ENCODE measurements at regions of chr16 and their contacts with region 1.

Region 1: GRCh38 chr16:28924732-28925385 is at the start of gene RABEP2:
- DNase-seq: peak; percentile 89 to 100 (median 96)
- ATAC-seq: peak; percentile 89
- H3K4me3 ChIP-seq: peak within 1 kb of the TSS; percentile 74
- H3K4me3 Mint-ChIP-seq: peak within 1 kb of the TSS; percentile 89 to 97 (median 94)
- H3K27ac ChIP-seq: peak within 1 kb of the TSS; percentile 99
- H3K27ac Mint-ChIP-seq: peak within 1 kb of the TSS; percentile 97 to 99 (median 99)
- H3K4me1 ChIP-seq: peaks cover 7 to 8% of the 10 kb centered on the region in 2 donors
- H3K4me1 Mint-ChIP-seq: peaks cover 15 to 24% (median 19%) of the 10 kb centered on the region in 7 donors
- H3K27me3 ChIP-seq: no peaks in the 10 kb centered on the region
- H3K27me3 Mint-ChIP-seq: no peaks in the 10 kb centered on the region
- total RNA-seq, gene RABEP2: 19.9 to 30.3 (median 27.3) TPM

Region 2: DNA sequence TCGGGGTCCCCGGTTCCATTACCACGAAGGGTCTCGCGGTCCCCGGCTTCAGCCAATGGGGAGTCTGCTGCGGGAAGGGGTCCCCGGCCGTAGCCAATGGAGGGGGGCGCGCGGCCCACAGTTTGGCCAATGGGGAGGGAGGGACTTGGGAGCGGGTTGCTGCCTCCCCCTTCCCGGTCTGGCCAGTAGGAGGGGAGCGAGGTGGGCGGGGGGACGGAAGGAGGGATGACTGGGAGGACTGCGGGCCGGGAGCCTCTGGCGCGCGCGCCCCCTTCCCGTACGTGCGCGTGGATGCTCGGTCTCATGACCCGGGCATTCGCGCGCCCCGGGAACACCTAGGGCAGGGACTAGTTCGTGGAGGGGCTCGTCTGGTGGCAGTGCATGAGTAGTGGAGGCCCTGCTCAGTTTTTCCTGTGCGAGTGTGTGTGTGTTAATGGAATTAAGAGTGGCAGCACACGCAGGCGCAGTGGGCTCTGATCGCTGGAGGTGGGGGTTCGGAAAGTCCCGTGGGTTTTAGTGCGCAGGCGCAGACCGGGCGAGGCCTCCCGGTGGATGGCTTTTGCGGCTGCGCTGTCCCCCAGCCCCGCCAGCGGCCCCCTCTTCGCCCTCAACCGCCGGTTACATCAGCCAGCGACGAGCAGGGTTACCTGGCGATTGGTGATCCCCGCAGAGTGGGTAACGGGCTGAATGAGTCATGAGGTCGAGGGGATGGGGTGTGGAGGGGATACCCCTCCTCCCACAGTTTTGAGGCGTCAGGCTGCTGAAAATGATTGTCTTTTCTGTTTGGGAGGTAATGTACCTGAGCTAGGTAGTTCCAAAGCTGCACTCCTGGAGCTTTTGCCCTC is 100.8 kb before region 1 on chr16:
- CTCF ChIA-PET with region 1: interaction called, 3 read pairs
- POLR2A ChIA-PET with region 1: interaction called, 12 read pairs
- intact Hi-C with region 1: loop called (anchors 1 kb)
- DNase-seq: peak; percentile 92 to 97 (median 94)
- ATAC-seq: peak; percentile 82
- H3K4me3 ChIP-seq: peak overlapping the region; percentile 79
- H3K4me3 Mint-ChIP-seq: peak overlapping the region; percentile 92 to 99 (median 97)
- H3K27ac ChIP-seq: peak overlapping the region; percentile 94
- H3K27ac Mint-ChIP-seq: peak overlapping the region; percentile 96 to 100 (median 99)
- H3K4me1 ChIP-seq: peaks cover 19 to 20% of the 10 kb centered on the region in 2 donors
- H3K4me1 Mint-ChIP-seq: peaks cover 14 to 55% (median 52%) of the 10 kb centered on the region in 7 donors
- H3K27me3 ChIP-seq: no peaks in the 10 kb centered on the region
- H3K27me3 Mint-ChIP-seq: peaks cover 0 to 4% (median 0%) of the 10 kb centered on the region in 5 donors

Region 3: DNA sequence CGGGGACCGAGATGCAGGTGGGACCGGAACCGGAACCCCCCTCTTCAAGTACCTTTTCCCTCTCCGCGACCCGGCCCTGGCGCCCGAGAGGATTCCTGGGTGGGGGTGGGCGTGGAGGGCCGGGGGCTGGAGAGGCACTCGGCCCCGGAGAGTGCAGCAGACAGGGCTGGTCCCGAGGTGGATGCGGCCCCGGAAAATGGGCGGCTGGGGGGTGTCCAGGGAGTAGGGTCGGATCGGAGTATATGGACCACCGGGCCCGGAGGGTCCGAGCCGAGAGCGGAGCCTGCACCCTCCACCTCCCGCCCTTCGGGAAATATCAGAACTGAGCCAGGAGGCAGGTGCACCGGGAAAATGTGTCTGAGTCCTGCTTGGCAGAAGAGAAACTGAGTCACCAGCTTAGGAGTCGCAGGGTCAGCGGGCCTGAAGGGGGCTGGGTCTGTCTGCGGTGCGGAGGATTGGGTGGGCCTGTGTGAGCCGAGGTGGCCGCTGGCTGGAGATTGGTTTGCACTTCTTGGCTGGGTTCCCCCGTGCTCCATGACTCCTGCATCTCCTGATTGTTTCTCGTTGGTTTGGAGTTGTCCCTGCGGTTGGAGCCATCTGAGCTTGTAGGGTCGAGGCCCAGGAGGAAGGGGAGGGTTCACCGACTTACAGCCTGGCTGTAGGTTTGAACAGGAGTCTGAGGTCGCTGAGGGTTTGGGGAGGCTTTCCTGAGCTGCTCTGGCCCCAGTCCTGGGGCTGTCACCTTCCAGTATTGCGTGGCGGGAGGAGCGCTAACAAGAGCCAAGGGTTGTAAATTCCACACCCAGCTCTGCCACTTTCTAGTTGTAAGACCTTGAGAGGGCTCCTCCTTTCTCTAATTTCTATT is 60.7 kb before region 1 on chr16:
- CTCF ChIA-PET with region 1: no interaction called
- POLR2A ChIA-PET with region 1: interaction called, 3 read pairs
- intact Hi-C with region 1: loop called (anchors 1 kb)
- DNase-seq: peak in 4 of 9 donors; percentile 24 to 43 (median 30)
- ATAC-seq: no peak
- H3K4me3 ChIP-seq: peak overlapping the region; percentile 96
- H3K4me3 Mint-ChIP-seq: peak overlapping the region; percentile 97 to 100 (median 99)
- H3K27ac ChIP-seq: peak overlapping the region; percentile 85
- H3K27ac Mint-ChIP-seq: peak overlapping the region; percentile 95 to 99 (median 97)
- H3K4me1 ChIP-seq: peaks cover 7 to 11% of the 10 kb centered on the region in 2 donors
- H3K4me1 Mint-ChIP-seq: peaks cover 15 to 42% (median 29%) of the 10 kb centered on the region in 7 donors
- H3K27me3 ChIP-seq: no peaks in the 10 kb centered on the region
- H3K27me3 Mint-ChIP-seq: no peaks in the 10 kb centered on the region

Region 4: DNA sequence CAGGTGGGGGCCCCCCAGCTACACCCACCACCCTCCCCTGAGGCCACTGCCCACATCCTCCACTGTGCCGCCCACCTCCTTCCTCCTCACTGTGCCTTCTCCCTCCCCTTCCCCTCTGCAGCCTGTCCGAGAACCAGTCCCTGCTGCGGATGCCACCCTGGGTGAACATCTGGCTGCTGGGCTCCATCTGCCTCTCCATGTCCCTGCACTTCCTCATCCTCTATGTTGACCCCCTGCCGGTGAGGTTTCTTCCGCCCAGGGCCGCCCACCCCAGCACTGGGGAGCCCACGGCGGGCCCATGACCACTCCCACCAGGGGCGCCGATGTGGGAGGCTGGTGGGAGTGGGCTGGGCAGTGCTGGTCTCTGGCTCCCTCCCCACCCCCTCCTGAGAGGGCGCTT is 21.9 kb before region 1 on chr16:
- CTCF ChIA-PET with region 1: no interaction called
- POLR2A ChIA-PET with region 1: no interaction called
- intact Hi-C with region 1: no loop called
- DNase-seq: no peak
- ATAC-seq: peak; percentile 40
- H3K4me3 ChIP-seq: no peak overlapping the region
- H3K4me3 Mint-ChIP-seq: no peak overlapping the region
- H3K27ac ChIP-seq: no peak overlapping the region
- H3K27ac Mint-ChIP-seq: peak overlapping the region in 1 of 9 donors; percentile 80
- H3K4me1 ChIP-seq: no peaks in the 10 kb centered on the region
- H3K4me1 Mint-ChIP-seq: peaks cover 0 to 3% (median 0%) of the 10 kb centered on the region in 7 donors
- H3K27me3 ChIP-seq: no peaks in the 10 kb centered on the region
- H3K27me3 Mint-ChIP-seq: no peaks in the 10 kb centered on the region

Region 5: GRCh38 chr16:28935924-28936783 is 11.3 kb after region 1 on chr16:
- CTCF ChIA-PET with region 1: no interaction called
- POLR2A ChIA-PET with region 1: interaction called, 14 read pairs
- intact Hi-C with region 1: loop called (anchors 1 kb)
- DNase-seq: peak; percentile 75 to 92 (median 86)
- ATAC-seq: peak; percentile 100
- H3K4me3 ChIP-seq: peak overlapping the region; percentile 14
- H3K4me3 Mint-ChIP-seq: peak overlapping the region; percentile 54 to 82 (median 78)
- H3K27ac ChIP-seq: peak overlapping the region; percentile 51
- H3K27ac Mint-ChIP-seq: peak overlapping the region; percentile 17 to 87 (median 74)
- H3K4me1 ChIP-seq: peaks cover 0 to 9% of the 10 kb centered on the region in 2 donors
- H3K4me1 Mint-ChIP-seq: peaks cover 13 to 23% (median 19%) of the 10 kb centered on the region in 7 donors
- H3K27me3 ChIP-seq: no peaks in the 10 kb centered on the region
- H3K27me3 Mint-ChIP-seq: peaks cover 0 to 4% (median 0%) of the 10 kb centered on the region in 5 donors

Region 6: GRCh38 chr16:28950648-28951409 is 26.0 kb after region 1 on chr16 and contains the start of gene NFATC2IP:
- CTCF ChIA-PET with region 1: interaction called, 11 read pairs
- POLR2A ChIA-PET with region 1: interaction called, 4 read pairs
- intact Hi-C with region 1: loop called in 1 of 2 experiments (anchors 1 kb)
- DNase-seq: peak; percentile 98 to 100 (median 99)
- ATAC-seq: peak; percentile 98
- H3K4me3 ChIP-seq: peak within 1 kb of the TSS; percentile 73
- H3K4me3 Mint-ChIP-seq: peak within 1 kb of the TSS; percentile 75 to 100 (median 92)
- H3K27ac ChIP-seq: peak within 1 kb of the TSS; percentile 81
- H3K27ac Mint-ChIP-seq: peak within 1 kb of the TSS; percentile 67 to 94 (median 86)
- H3K4me1 ChIP-seq: peaks cover 10 to 14% of the 10 kb centered on the region in 2 donors
- H3K4me1 Mint-ChIP-seq: peaks cover 10 to 41% (median 37%) of the 10 kb centered on the region in 7 donors
- H3K27me3 ChIP-seq: no peaks in the 10 kb centered on the region
- H3K27me3 Mint-ChIP-seq: peaks cover 0 to 6% (median 0%) of the 10 kb centered on the region in 5 donors
- total RNA-seq, gene NFATC2IP: 70.9 to 117 (median 111) TPM

Region 7: GRCh38 chr16:28984619-28985135 is 59.8 kb after region 1 on chr16 and contains the start of gene LAT:
- CTCF ChIA-PET with region 1: interaction called, 3 read pairs
- POLR2A ChIA-PET with region 1: interaction called, 4 read pairs
- intact Hi-C with region 1: loop called in 1 of 2 experiments (anchors 5 kb)
- DNase-seq: peak; percentile 67 to 87 (median 84)
- ATAC-seq: peak; percentile 86
- H3K4me3 ChIP-seq: peak within 1 kb of the TSS; percentile 98
- H3K4me3 Mint-ChIP-seq: peak within 1 kb of the TSS; percentile 94 to 100 (median 98)
- H3K27ac ChIP-seq: peak within 1 kb of the TSS; percentile 87
- H3K27ac Mint-ChIP-seq: peak within 1 kb of the TSS; percentile 94 to 99 (median 97)
- H3K4me1 ChIP-seq: peaks cover 41% of the 10 kb centered on the region in 2 donors
- H3K4me1 Mint-ChIP-seq: peaks cover 41 to 54% (median 49%) of the 10 kb centered on the region in 7 donors
- H3K27me3 ChIP-seq: no peaks in the 10 kb centered on the region
- H3K27me3 Mint-ChIP-seq: no peaks in the 10 kb centered on the region
- total RNA-seq, gene LAT: 179 to 476 (median 342) TPM

Measured in naive thymus-derived CD4-positive, alpha-beta T cell (primary cell).